ENCODE measurements at regions of chr14 and their contacts with region 1.

Region 1: GRCh38 chr14:65961004-65961403 is 525.2 kb upstream of the CCDC196 start:
- DNase-seq: peak; percentile 59
- H3K4me3 Mint-ChIP-seq: no peak overlapping the region
- H3K27ac Mint-ChIP-seq: no peak overlapping the region
- H3K4me1 Mint-ChIP-seq: peaks cover 40% of the 10 kb centered on the region
- H3K27me3 Mint-ChIP-seq: peaks cover 11% of the 10 kb centered on the region

Region 2: GRCh38 chr14:65824285-65824977 is 136.6 kb before region 1 on chr14:
- CTCF ChIA-PET with region 1: interaction called, 12 read pairs
- POLR2A ChIA-PET with region 1: no interaction called
- DNase-seq: peak; percentile 72
- H3K4me3 Mint-ChIP-seq: no peak overlapping the region
- H3K27ac Mint-ChIP-seq: no peak overlapping the region
- H3K4me1 Mint-ChIP-seq: peaks cover 29% of the 10 kb centered on the region
- H3K27me3 Mint-ChIP-seq: peaks cover 3% of the 10 kb centered on the region

Region 3: GRCh38 chr14:65949711-65950516 is 11.1 kb before region 1 on chr14:
- CTCF ChIA-PET with region 1: interaction called, 10 read pairs
- POLR2A ChIA-PET with region 1: no interaction called
- DNase-seq: no peak
- H3K4me3 Mint-ChIP-seq: no peak overlapping the region
- H3K27ac Mint-ChIP-seq: peak overlapping the region; percentile 76
- H3K4me1 Mint-ChIP-seq: peaks cover 34% of the 10 kb centered on the region
- H3K27me3 Mint-ChIP-seq: peaks cover 1% of the 10 kb centered on the region

Measured in activated CD4-positive, alpha-beta T cell treated with anti-CD3 and anti-CD28 coated beads, Interleukin-2, amount 10 ng/mL, durations not matched to agents 7 days and 5 days (primary cell).